Activated CD4-positive, alpha-beta T cell treated with anti-CD3 and anti-CD28 coated beads for 36 hours (primary cell): ENCODE measurements at regions of chr7 and their contacts with region 1.

Region 1: GRCh38 chr7:151232091-151232916 is at the start of gene CHPF2:
- DNase-seq: peak; percentile 95
- ATAC-seq: peak; percentile 90
- H3K4me3 Mint-ChIP-seq: peak within 1 kb of the TSS; percentile 98
- H3K27ac Mint-ChIP-seq: peak within 1 kb of the TSS; percentile 99
- H3K4me1 Mint-ChIP-seq: peaks cover 34% of the 10 kb centered on the region
- H3K27me3 Mint-ChIP-seq: no peaks in the 10 kb centered on the region
- total RNA-seq, gene CHPF2: 20.7 to 27.3 TPM

Region 2: DNA sequence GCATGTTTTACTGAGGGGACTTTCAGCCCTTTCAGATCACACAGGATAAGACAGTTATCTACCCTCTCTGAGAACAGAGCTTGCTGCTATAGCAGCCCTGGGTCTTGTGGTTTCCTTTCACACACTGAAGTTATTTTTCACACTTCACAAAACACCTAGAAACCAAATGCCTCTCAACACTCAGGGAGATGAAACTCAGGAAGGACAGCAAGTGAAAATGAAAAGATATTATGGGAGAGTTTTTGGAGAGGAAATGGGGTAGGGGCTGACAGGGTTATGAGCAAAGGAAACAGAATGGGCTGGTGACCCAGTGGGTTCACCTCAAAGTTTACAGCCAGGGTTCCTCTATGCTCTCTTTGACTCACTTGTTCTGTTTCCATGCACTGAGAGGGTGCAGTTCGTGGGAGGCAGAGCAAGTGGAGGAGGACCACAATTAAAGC is 563.8 kb before region 1 on chr7:
- CTCF ChIA-PET with region 1: no interaction called
- POLR2A ChIA-PET with region 1: no interaction called
- intact Hi-C with region 1: no loop called
- DNase-seq: peak; percentile 77
- ATAC-seq: peak; percentile 76
- H3K4me3 Mint-ChIP-seq: peak overlapping the region; percentile 28
- H3K27ac Mint-ChIP-seq: peak overlapping the region; percentile 94
- H3K4me1 Mint-ChIP-seq: peaks cover 89% of the 10 kb centered on the region
- H3K27me3 Mint-ChIP-seq: no peaks in the 10 kb centered on the region

Region 3: DNA sequence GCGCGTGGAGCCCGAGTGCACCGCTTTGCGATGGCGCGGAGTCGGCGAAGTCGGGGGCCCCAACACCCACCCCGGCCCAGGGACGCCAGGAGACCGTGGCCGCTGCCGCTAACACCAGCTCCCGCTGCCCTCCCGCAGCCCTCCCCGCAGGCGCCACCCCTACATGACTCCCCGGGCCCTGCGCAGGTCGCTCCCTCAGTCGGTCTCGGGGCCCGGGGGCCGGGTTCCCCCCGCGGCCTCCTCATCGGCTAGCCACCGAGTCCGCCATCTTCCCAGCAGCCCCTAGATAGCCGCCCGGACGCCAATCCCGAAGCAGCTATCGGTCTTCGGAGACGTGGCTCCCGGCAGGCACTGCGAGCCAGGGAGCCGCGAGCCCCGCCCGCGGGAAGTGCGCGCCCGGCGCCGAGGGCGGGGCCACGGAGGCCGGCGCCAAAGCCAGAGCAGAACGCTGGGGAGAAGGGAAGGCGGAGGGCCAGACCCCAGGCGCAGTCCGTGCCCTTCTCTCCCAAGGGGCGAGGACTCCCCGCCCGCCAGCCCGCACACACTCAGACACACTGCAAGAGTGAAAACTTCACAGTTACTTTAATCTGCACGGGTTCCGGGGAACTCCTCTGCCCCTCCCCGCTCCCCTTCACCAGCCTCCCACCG is 151.7 kb before region 1 on chr7 and contains the start of gene FASTK:
- CTCF ChIA-PET with region 1: no interaction called
- POLR2A ChIA-PET with region 1: interaction called, 7 read pairs
- intact Hi-C with region 1: loop called (anchors 1 to 5 kb)
- DNase-seq: peak; percentile 94
- ATAC-seq: peak; percentile 89
- H3K4me3 Mint-ChIP-seq: peak within 1 kb of the TSS; percentile 94
- H3K27ac Mint-ChIP-seq: peak within 1 kb of the TSS; percentile 91
- H3K4me1 Mint-ChIP-seq: peaks cover 43% of the 10 kb centered on the region
- H3K27me3 Mint-ChIP-seq: peaks cover 7% of the 10 kb centered on the region
- total RNA-seq, gene FASTK: 56.6 to 56.7 TPM

Region 4: DNA sequence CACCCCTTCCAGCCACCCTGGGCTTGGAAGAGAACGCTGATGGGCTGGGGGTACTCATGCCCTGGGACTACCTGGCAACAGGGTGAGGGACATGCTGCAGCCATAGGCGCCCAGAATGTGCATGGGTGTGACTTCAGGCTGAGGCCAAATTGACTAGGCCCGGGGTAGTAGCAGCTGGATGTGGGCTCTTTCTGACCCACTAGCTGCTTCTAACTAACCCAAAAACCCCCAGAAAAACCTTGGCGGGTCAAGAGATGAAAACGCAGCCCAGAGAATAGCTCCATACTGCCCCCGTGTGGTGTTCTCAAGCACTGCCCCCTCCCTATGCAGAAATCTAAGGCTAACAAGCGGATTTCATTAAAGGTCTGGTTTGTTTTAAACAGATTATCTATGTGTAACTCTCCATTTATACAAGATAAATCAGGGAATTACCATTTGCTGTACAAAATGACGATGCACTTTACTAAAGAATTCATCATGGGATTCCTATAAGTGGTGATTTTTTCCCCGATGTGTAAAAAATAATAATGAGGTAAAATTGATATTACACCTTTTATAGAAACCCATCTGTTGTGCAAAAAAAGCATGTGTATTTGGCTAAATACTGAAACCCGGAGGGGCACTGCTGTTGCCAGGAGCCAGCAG is 12.0 kb after region 1 on chr7:
- CTCF ChIA-PET with region 1: interaction called, 49 read pairs
- POLR2A ChIA-PET with region 1: interaction called, 6 read pairs
- intact Hi-C with region 1: loop called (anchors 1 kb)
- DNase-seq: peak; percentile 81
- ATAC-seq: peak; percentile 27
- H3K4me3 Mint-ChIP-seq: peak overlapping the region; percentile 58
- H3K27ac Mint-ChIP-seq: no peak overlapping the region
- H3K4me1 Mint-ChIP-seq: peaks cover 36% of the 10 kb centered on the region
- H3K27me3 Mint-ChIP-seq: peaks cover 23% of the 10 kb centered on the region